ENCODE measurements at regions of chr12 and their contacts with region 1.

Region 1: GRCh38 chr12:12890815-12891645 is at the start of gene GPRC5A:
- DNase-seq: peak; percentile 97
- ATAC-seq: peak; percentile 75
- H3K4me3 ChIP-seq: peak within 1 kb of the TSS; percentile 97
- H3K27ac ChIP-seq: peak within 1 kb of the TSS; percentile 99
- H3K4me1 ChIP-seq: peaks cover 48% of the 10 kb centered on the region
- H3K27me3 ChIP-seq: no peaks in the 10 kb centered on the region
- CTCF ChIP-seq: peak; percentile 50; the same call in 1 of the 2 replicates
- total RNA-seq, gene GPRC5A: 140 and 144 TPM in 2 replicates

Region 2: GRCh38 chr12:12813120-12814101 is 77.6 kb before region 1 on chr12 and contains the start of gene DDX47:
- CTCF ChIA-PET with region 1: interaction called, 6 read pairs
- POLR2A ChIA-PET with region 1: interaction called, 14 read pairs
- intact Hi-C with region 1: no loop called
- DNase-seq: peak; percentile 91
- ATAC-seq: peak; percentile 77
- H3K4me3 ChIP-seq: peak within 1 kb of the TSS; percentile 93
- H3K27ac ChIP-seq: peak within 1 kb of the TSS; percentile 61
- H3K4me1 ChIP-seq: peaks cover 43% of the 10 kb centered on the region
- H3K27me3 ChIP-seq: no peaks in the 10 kb centered on the region
- CTCF ChIP-seq: peak; percentile 74
- total RNA-seq, gene DDX47: 58.9 and 59.0 TPM in 2 replicates

Region 3: GRCh38 chr12:12872139-12872881 is 18.7 kb before region 1 on chr12:
- CTCF ChIA-PET with region 1: interaction called, 3 read pairs
- POLR2A ChIA-PET with region 1: interaction called, 33 read pairs
- intact Hi-C with region 1: loop called (anchors 1 kb)
- DNase-seq: peak; percentile 96
- ATAC-seq: peak; percentile 70
- H3K4me3 ChIP-seq: peak overlapping the region; percentile 47; the same call in 1 of the 2 replicates
- H3K27ac ChIP-seq: peak overlapping the region; percentile 99
- H3K4me1 ChIP-seq: peaks cover 58% of the 10 kb centered on the region
- H3K27me3 ChIP-seq: no peaks in the 10 kb centered on the region
- CTCF ChIP-seq: no peak

Region 4: GRCh38 chr12:12979731-12980259 is 88.8 kb after region 1 on chr12:
- CTCF ChIA-PET with region 1: no interaction called
- POLR2A ChIA-PET with region 1: no interaction called
- intact Hi-C with region 1: no loop called
- DNase-seq: peak; percentile 64
- ATAC-seq: peak; percentile 61
- H3K4me3 ChIP-seq: no peak overlapping the region
- H3K27ac ChIP-seq: peak overlapping the region; percentile 57
- H3K4me1 ChIP-seq: peaks cover 34% of the 10 kb centered on the region
- H3K27me3 ChIP-seq: no peaks in the 10 kb centered on the region
- CTCF ChIP-seq: no peak

Region 5: GRCh38 chr12:14111230-14111865 is 1220.3 kb after region 1 on chr12:
- CTCF ChIA-PET with region 1: no interaction called
- POLR2A ChIA-PET with region 1: no interaction called
- intact Hi-C with region 1: no loop called
- DNase-seq: peak; percentile 30
- ATAC-seq: no peak
- H3K4me3 ChIP-seq: no peak overlapping the region
- H3K27ac ChIP-seq: no peak overlapping the region
- H3K4me1 ChIP-seq: no peaks in the 10 kb centered on the region
- H3K27me3 ChIP-seq: no peaks in the 10 kb centered on the region
- CTCF ChIP-seq: peak; percentile 50

Measured in PC-3 (cell line).